Activated CD4-positive, alpha-beta T cell treated with anti-CD3 and anti-CD28 coated beads for 36 hours (primary cell): ENCODE measurements at regions of chr13 and their contacts with region 1.

Region 1: DNA sequence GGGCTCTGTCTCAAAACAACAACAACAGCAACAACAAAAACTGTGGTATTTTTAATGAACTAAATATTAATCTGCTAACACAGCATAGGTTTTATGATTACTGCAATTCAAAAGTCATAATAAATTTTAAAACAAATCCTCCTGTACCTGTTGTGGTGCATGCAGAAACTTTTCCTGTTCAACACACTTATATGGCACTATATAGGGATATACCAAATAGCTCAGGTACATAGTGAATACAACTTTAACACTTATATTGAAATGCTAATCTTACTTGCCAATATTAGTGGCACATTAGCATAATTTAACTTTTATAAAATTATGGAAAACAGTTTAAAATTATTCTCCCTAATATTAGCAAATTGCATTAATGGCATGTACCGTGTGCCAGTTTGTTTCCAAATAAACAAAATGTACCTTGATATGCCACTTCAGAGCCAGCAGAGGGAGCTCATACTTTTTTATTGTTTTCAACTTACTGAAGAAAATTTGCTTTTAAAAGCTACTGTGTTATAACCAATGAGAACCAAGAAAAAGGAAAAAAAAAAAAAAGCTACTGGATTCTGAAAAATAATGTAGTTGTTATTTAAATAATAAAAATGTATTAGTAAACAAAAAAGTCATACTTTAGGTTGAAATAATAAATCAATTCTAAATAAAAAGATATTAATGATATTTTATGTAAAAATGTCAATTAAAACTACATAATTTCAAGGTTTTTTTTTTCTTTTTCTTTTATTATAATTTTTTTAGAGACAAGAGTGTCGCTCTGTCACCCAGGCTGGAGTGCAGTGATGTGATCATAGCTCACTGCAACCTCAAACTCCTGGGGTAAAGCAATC is 18.0 kb upstream of the RBM26 start:
- DNase-seq: no peak
- ATAC-seq: peak; percentile 74
- H3K4me3 Mint-ChIP-seq: no peak overlapping the region
- H3K27ac Mint-ChIP-seq: no peak overlapping the region
- H3K4me1 Mint-ChIP-seq: peaks cover 15% of the 10 kb centered on the region
- H3K27me3 Mint-ChIP-seq: no peaks in the 10 kb centered on the region

Region 2: DNA sequence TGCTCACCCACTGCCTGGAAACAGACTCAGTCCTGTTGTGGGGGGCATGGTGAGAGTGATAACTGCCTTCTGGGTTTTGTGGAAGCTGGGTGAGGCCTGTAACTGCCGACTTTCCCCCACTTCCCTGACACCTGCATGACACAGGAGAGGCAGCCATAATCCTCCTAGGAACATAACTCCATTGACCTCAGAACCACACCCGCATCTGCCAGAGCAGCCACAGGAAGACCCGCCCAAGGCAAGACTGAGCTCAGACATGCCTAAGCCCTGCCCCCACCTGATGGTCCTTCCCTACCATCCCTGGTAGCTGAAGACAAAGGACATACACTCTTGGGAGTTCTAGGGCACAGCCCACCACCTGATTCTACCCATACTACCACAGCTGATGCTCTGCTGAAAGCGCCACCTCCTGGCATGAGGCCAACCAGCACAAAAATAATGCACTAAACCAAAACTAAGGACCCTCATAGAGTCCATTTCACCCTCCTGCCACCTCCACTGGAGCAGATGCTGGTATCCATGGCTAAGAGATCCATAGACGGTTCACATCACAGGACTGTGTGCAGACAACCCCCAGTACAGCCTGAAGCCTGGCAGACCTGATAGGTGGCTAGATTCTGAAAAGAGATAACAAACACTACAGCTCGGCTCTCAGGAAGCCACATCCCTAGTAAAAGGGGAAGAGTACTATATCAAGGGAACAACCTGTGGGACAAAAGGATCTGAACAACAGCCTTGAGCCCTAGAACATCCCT is 344.5 kb before region 1 on chr13:
- CTCF ChIA-PET with region 1: no interaction called
- POLR2A ChIA-PET with region 1: no interaction called
- intact Hi-C with region 1: no loop called
- DNase-seq: no peak
- ATAC-seq: no peak
- H3K4me3 Mint-ChIP-seq: no peak overlapping the region
- H3K27ac Mint-ChIP-seq: no peak overlapping the region
- H3K4me1 Mint-ChIP-seq: no peaks in the 10 kb centered on the region
- H3K27me3 Mint-ChIP-seq: peaks cover 6% of the 10 kb centered on the region

Region 3: GRCh38 chr13:79405829-79406596 is 18.0 kb before region 1 on chr13 and contains the start of gene RBM26:
- CTCF ChIA-PET with region 1: interaction called, 18 read pairs
- POLR2A ChIA-PET with region 1: no interaction called
- intact Hi-C with region 1: no loop called
- DNase-seq: peak; percentile 97
- ATAC-seq: peak; percentile 87
- H3K4me3 Mint-ChIP-seq: no peak within 1 kb of the TSS
- H3K27ac Mint-ChIP-seq: peak within 1 kb of the TSS; percentile 98
- H3K4me1 Mint-ChIP-seq: peaks cover 44% of the 10 kb centered on the region
- H3K27me3 Mint-ChIP-seq: no peaks in the 10 kb centered on the region
- total RNA-seq, gene RBM26: 61.3 to 79.6 TPM

Region 4: GRCh38 chr13:79434556-79434955 is 10.5 kb after region 1 on chr13:
- CTCF ChIA-PET with region 1: interaction called, 19 read pairs
- POLR2A ChIA-PET with region 1: no interaction called
- intact Hi-C with region 1: no loop called
- DNase-seq: no peak
- ATAC-seq: no peak
- H3K4me3 Mint-ChIP-seq: no peak overlapping the region
- H3K27ac Mint-ChIP-seq: no peak overlapping the region
- H3K4me1 Mint-ChIP-seq: peaks cover 13% of the 10 kb centered on the region
- H3K27me3 Mint-ChIP-seq: no peaks in the 10 kb centered on the region

Region 5: DNA sequence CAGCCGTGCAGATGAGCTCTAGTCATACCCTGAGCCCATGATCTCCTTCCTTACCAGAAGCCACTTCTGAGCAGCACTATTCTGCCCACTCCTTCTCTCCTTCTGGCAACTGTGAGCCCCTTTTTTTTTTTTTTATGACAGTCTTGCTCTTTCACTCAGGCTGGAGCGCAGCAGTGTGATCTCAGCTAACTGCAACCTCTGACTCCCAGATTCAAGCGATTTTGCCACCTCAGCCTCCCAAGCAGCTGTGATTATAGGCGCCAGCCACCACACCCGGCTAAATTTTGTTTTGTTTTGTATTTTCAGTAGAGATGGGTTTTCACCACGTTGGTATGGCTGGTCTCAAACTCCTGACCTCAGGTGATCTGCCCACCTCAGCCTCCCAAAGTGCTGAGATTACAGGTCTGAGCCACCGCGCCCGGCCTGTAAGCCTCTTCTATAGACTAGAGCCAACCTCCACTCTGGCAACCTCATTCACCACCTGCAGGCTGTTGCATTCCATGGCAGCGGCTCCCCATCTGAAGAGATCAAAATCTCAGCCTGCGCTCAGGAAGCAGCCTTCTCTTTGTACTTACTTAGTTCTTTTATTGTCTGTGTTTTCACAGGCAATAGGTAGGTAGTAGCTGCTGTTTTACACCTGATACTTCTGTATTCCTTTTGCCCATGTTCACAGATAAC is 22.1 kb after region 1 on chr13:
- CTCF ChIA-PET with region 1: interaction called, 24 read pairs
- POLR2A ChIA-PET with region 1: no interaction called
- intact Hi-C with region 1: no loop called
- DNase-seq: peak; percentile 63
- ATAC-seq: peak; percentile 84
- H3K4me3 Mint-ChIP-seq: peak overlapping the region; percentile 33
- H3K27ac Mint-ChIP-seq: peak overlapping the region; percentile 56
- H3K4me1 Mint-ChIP-seq: peaks cover 63% of the 10 kb centered on the region
- H3K27me3 Mint-ChIP-seq: no peaks in the 10 kb centered on the region

Region 6: DNA sequence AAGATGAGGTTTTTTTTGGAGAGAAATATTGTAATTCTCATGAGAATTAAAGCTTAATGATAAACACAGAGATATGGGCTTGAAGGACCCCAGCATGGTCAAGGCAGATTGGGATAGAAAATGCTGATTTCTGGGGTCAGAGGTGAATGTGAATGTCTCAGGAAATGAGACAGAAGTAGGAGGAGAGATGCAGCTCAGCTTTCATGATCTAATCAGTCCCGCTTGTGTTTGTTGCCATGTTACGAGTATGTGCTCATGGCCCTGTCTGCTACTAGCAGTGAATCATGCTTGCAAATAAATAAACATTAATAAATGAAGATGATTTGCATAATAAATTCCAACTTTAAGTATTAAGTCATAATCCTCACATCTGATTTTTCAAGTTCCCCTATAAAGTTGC is 33.9 kb after region 1 on chr13:
- CTCF ChIA-PET with region 1: interaction called, 12 read pairs
- POLR2A ChIA-PET with region 1: no interaction called
- intact Hi-C with region 1: no loop called
- DNase-seq: peak; percentile 44
- ATAC-seq: peak; percentile 83
- H3K4me3 Mint-ChIP-seq: no peak overlapping the region
- H3K27ac Mint-ChIP-seq: no peak overlapping the region
- H3K4me1 Mint-ChIP-seq: peaks cover 47% of the 10 kb centered on the region
- H3K27me3 Mint-ChIP-seq: no peaks in the 10 kb centered on the region

Region 7: DNA sequence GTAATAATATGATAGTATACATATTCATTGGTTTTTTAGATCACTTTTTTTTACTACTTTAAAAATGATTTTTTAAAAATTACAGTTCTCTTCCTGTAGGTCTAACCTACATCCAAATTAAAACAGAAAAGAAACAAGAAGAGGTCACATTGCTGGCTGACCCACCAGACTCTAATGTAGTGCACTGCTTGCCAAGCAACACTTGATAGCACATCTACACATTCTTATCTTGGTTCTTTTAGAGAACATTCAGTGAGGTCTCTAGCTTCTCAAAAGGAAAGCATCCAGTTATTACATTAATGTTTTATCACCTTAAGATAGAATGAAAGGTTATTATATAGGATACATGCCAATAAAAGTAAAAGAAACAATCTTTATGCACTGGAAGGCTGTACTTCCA is 92.6 kb after region 1 on chr13:
- CTCF ChIA-PET with region 1: interaction called, 19 read pairs
- POLR2A ChIA-PET with region 1: no interaction called
- intact Hi-C with region 1: no loop called
- DNase-seq: no peak
- ATAC-seq: no peak
- H3K4me3 Mint-ChIP-seq: no peak overlapping the region
- H3K27ac Mint-ChIP-seq: no peak overlapping the region
- H3K4me1 Mint-ChIP-seq: peaks cover 53% of the 10 kb centered on the region
- H3K27me3 Mint-ChIP-seq: no peaks in the 10 kb centered on the region

Region 8: GRCh38 chr13:79541426-79542049 is 117.5 kb after region 1 on chr13:
- CTCF ChIA-PET with region 1: interaction called, 366 read pairs
- POLR2A ChIA-PET with region 1: interaction called, 5 read pairs
- intact Hi-C with region 1: loop called (anchors 1 kb)
- DNase-seq: no peak
- ATAC-seq: no peak
- H3K4me3 Mint-ChIP-seq: no peak overlapping the region
- H3K27ac Mint-ChIP-seq: no peak overlapping the region
- H3K4me1 Mint-ChIP-seq: peaks cover 9% of the 10 kb centered on the region
- H3K27me3 Mint-ChIP-seq: no peaks in the 10 kb centered on the region